T-cell (primary cell): ENCODE measurements at regions of chr6 and their contacts with region 1.

Region 1: DNA sequence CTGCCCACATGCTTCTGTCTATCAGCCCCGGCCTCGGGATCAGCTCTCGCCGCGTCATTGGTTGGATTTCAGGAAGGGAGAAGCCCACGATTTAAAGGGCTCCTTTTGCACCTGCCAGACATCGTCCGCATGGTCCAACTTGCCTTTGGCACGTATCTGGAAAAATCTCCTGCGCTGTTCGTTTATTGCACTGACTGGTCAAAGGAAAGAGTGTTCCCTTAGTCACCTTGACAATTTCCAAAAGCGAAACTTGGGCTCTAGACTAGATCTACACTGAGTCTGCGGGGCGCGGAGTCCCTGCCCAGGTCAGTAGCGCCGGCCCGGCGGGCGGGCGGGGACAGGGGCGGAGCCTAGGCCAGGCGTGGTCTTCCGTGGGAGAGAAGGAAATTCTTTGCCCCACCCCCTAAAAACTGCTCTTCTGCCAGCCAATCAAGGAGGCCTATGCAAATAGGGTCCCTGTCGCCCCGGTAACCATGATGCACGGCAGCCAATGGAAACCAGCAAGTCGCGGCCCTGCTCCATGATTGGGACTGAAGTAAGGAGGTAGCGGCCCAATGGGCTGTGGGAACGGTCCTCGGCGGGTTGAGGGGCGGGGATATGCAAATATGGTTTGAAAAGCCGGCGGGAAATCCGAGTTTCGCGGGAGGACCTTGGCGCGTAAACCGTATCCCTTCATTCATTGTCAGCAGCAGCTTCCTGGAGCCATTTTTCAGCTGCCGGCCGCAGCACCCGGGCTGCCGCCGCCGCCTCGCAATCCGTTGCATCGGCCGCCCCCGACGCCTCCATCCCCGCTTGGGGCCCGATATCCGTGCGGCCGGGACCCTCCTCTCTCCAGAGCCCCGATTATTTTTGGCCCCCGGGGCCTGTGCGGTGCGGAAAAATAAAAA is at the start of gene E2F3:
- DNase-seq: peak; percentile 96 to 100 (median 99)
- ATAC-seq: peak; percentile 84 to 87 (median 86)
- H3K4me3 ChIP-seq: peak within 1 kb of the TSS; percentile 67 to 92
- H3K4me3 Mint-ChIP-seq: peak within 1 kb of the TSS; percentile 96 to 100 (median 98)
- H3K27ac ChIP-seq: peak within 1 kb of the TSS; percentile 21
- H3K27ac Mint-ChIP-seq: peak within 1 kb of the TSS; percentile 81 to 84
- H3K4me1 ChIP-seq: peaks cover 19 to 26% of the 10 kb centered on the region in 2 experiments
- H3K4me1 Mint-ChIP-seq: peaks cover 34 to 37% (median 35%) of the 10 kb centered on the region in 3 donors
- H3K27me3 ChIP-seq: no peaks in the 10 kb centered on the region
- H3K27me3 Mint-ChIP-seq: no peaks in the 10 kb centered on the region
- total RNA-seq, gene E2F3: 9.6 to 28.2 (median 23.1) TPM

Region 2: DNA sequence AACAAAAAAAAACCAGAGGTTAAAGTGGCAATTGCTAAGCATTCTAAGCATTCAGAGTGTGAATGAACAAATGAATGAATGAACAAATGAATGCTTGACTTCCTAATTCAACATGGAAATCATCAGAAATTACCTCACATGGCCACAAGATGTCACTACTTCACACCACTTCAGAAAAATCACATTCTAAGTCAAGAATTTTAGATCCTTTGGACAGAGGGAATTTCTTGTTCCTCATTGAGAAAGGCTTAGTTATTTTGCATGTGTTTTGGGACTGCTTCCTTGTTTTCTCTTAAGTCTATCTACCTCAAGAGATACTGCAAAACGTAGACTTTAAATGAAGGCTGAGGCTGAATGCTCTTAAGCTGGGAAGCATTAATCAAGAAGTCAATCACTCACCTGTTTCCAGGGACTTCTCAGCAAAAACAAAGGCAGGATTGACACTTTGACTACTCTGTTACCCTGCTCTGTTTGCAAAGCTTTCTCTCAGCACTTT is 309.3 kb before region 1 on chr6:
- CTCF ChIA-PET with region 1: interaction called, 3 to 10 read pairs
- POLR2A ChIA-PET with region 1: no interaction called
- DNase-seq: peak in 2 of 35 experiments; percentile 4 to 56
- ATAC-seq: no peak
- H3K4me3 ChIP-seq: no peak overlapping the region
- H3K4me3 Mint-ChIP-seq: no peak overlapping the region
- H3K27ac ChIP-seq: no peak overlapping the region
- H3K27ac Mint-ChIP-seq: no peak overlapping the region
- H3K4me1 ChIP-seq: no peaks in the 10 kb centered on the region
- H3K4me1 Mint-ChIP-seq: no peaks in the 10 kb centered on the region
- H3K27me3 ChIP-seq: no peaks in the 10 kb centered on the region
- H3K27me3 Mint-ChIP-seq: no peaks in the 10 kb centered on the region

Region 3: GRCh38 chr6:20319520-20320357 is 81.7 kb before region 1 on chr6:
- CTCF ChIA-PET with region 1: interaction called in 1 of 2 experiments, 19 read pairs
- POLR2A ChIA-PET with region 1: interaction called, 5 to 26 read pairs
- DNase-seq: peak; percentile 53 to 91 (median 82)
- ATAC-seq: peak; percentile 89 to 96 (median 95)
- H3K4me3 ChIP-seq: peak overlapping the region; percentile 62 to 82
- H3K4me3 Mint-ChIP-seq: peak overlapping the region; percentile 79 to 88 (median 87)
- H3K27ac ChIP-seq: peak overlapping the region; percentile 96
- H3K27ac Mint-ChIP-seq: peak overlapping the region; percentile 93 to 97
- H3K4me1 ChIP-seq: peaks cover 2 to 15% of the 10 kb centered on the region in 2 experiments
- H3K4me1 Mint-ChIP-seq: peaks cover 18 to 28% (median 24%) of the 10 kb centered on the region in 3 donors
- H3K27me3 ChIP-seq: no peaks in the 10 kb centered on the region
- H3K27me3 Mint-ChIP-seq: no peaks in the 10 kb centered on the region

Region 4: GRCh38 chr6:20412682-20413073 is 11.2 kb after region 1 on chr6:
- CTCF ChIA-PET with region 1: interaction called in 1 of 2 experiments, 10 read pairs
- POLR2A ChIA-PET with region 1: interaction called in 1 of 2 experiments, 3 read pairs
- DNase-seq: no peak
- ATAC-seq: no peak
- H3K4me3 ChIP-seq: no peak overlapping the region
- H3K4me3 Mint-ChIP-seq: no peak overlapping the region
- H3K27ac ChIP-seq: no peak overlapping the region
- H3K27ac Mint-ChIP-seq: no peak overlapping the region
- H3K4me1 ChIP-seq: peaks cover 23 to 46% of the 10 kb centered on the region in 2 experiments
- H3K4me1 Mint-ChIP-seq: peaks cover 69 to 87% (median 69%) of the 10 kb centered on the region in 3 donors
- H3K27me3 ChIP-seq: no peaks in the 10 kb centered on the region
- H3K27me3 Mint-ChIP-seq: no peaks in the 10 kb centered on the region

Region 5: GRCh38 chr6:20534295-20535262 is 133.1 kb after region 1 on chr6 and contains the start of gene CDKAL1:
- CTCF ChIA-PET with region 1: interaction called, 5 to 11 read pairs
- POLR2A ChIA-PET with region 1: interaction called in 1 of 2 experiments, 12 read pairs
- DNase-seq: peak; percentile 73 to 94 (median 85)
- ATAC-seq: peak; percentile 87 to 93 (median 91)
- H3K4me3 ChIP-seq: peak within 1 kb of the TSS; percentile 94 to 100
- H3K4me3 Mint-ChIP-seq: peak within 1 kb of the TSS; percentile 95 to 98 (median 98)
- H3K27ac ChIP-seq: peak within 1 kb of the TSS; percentile 92
- H3K27ac Mint-ChIP-seq: peak within 1 kb of the TSS; percentile 94 to 98
- H3K4me1 ChIP-seq: peaks cover 7 to 14% of the 10 kb centered on the region in 2 experiments
- H3K4me1 Mint-ChIP-seq: peaks cover 41 to 42% (median 42%) of the 10 kb centered on the region in 3 donors
- H3K27me3 ChIP-seq: peaks cover 0 to 6% of the 10 kb centered on the region in 2 experiments
- H3K27me3 Mint-ChIP-seq: peaks cover 2 to 6% of the 10 kb centered on the region in 2 donors
- total RNA-seq, gene CDKAL1: 18.8 to 29.9 (median 20.5) TPM